ENCODE measurements at regions of chr13 and their contacts with region 1.

Region 1: GRCh38 chr13:20924758-20925394 is 22.3 kb upstream of the XPO4 start:
- DNase-seq: peak; percentile 48 to 82 (median 66)
- ATAC-seq: peak; percentile 67
- H3K4me3 ChIP-seq: no peak overlapping the region
- H3K4me3 Mint-ChIP-seq: no peak overlapping the region
- H3K27ac ChIP-seq: no peak overlapping the region
- H3K27ac Mint-ChIP-seq: no peak overlapping the region
- H3K4me1 ChIP-seq: no peaks in the 10 kb centered on the region
- H3K4me1 Mint-ChIP-seq: no peaks in the 10 kb centered on the region
- H3K27me3 ChIP-seq: no peaks in the 10 kb centered on the region
- H3K27me3 Mint-ChIP-seq: no peaks in the 10 kb centered on the region
- CTCF ChIP-seq: peak; percentile 78

Region 2: DNA sequence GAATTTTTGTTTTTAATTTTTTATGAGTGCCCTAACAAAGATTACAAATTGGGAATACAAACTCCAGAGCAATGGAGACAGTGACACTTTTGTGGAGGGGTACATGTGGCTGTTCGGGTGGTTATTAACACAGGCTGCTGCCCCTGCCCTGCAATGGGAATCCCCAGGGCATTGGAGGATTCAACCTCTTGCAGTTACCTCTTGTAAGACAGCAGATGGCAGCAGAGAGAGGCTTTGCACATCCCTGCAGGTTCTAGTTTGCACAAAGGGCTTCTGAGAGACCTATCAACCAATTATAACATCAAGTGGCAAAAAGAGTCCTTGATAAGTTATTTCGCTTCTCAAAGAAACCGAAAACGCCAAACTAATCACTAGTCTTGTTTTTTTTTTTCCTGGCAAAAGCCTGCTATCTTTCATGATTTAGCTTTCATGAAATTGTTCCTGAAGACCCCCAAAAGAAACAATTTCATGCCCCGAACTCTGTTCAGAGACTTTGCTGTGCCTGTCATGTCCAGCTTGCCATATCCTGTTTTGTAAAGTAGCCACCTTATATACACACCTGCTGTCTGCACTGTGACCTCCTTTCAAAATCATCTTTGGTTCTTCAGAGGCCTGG is 742.5 kb before region 1 on chr13:
- CTCF ChIA-PET with region 1: interaction called, 5 read pairs
- POLR2A ChIA-PET with region 1: no interaction called
- intact Hi-C with region 1: loop called in 1 of 2 experiments (anchors 5 kb)
- DNase-seq: peak in 11 of 14 experiments; percentile 26 to 87 (median 46)
- ATAC-seq: peak; percentile 100
- H3K4me3 ChIP-seq: no peak overlapping the region
- H3K4me3 Mint-ChIP-seq: no peak overlapping the region
- H3K27ac ChIP-seq: no peak overlapping the region
- H3K27ac Mint-ChIP-seq: no peak overlapping the region
- H3K4me1 ChIP-seq: peaks cover 2% of the 10 kb centered on the region
- H3K4me1 Mint-ChIP-seq: no peaks in the 10 kb centered on the region
- H3K27me3 ChIP-seq: peaks cover 17 to 20% of the 10 kb centered on the region in 2 experiments
- H3K27me3 Mint-ChIP-seq: peaks cover 48% of the 10 kb centered on the region
- CTCF ChIP-seq: peak; percentile 84

Region 3: GRCh38 chr13:20192158-20192835 is 732.6 kb before region 1 on chr13:
- CTCF ChIA-PET with region 1: no interaction called
- POLR2A ChIA-PET with region 1: no interaction called
- intact Hi-C with region 1: loop called in 1 of 2 experiments (anchors 5 kb)
- DNase-seq: peak in 3 of 14 experiments; percentile 11 to 40 (median 38)
- ATAC-seq: no peak
- H3K4me3 ChIP-seq: peak overlapping the region; percentile 44
- H3K4me3 Mint-ChIP-seq: peak overlapping the region; percentile 75
- H3K27ac ChIP-seq: no peak overlapping the region
- H3K27ac Mint-ChIP-seq: no peak overlapping the region
- H3K4me1 ChIP-seq: peaks cover 28% of the 10 kb centered on the region
- H3K4me1 Mint-ChIP-seq: peaks cover 25% of the 10 kb centered on the region
- H3K27me3 ChIP-seq: peaks cover 47 to 66% of the 10 kb centered on the region in 2 experiments
- H3K27me3 Mint-ChIP-seq: peaks cover 56% of the 10 kb centered on the region
- CTCF ChIP-seq: no peak

Region 4: GRCh38 chr13:20495082-20496023 is 429.5 kb before region 1 on chr13:
- CTCF ChIA-PET with region 1: interaction called, 8 read pairs
- POLR2A ChIA-PET with region 1: no interaction called
- intact Hi-C with region 1: loop called (anchors 1 kb)
- DNase-seq: peak; percentile 31 to 81 (median 50)
- ATAC-seq: peak; percentile 97
- H3K4me3 ChIP-seq: no peak overlapping the region
- H3K4me3 Mint-ChIP-seq: no peak overlapping the region
- H3K27ac ChIP-seq: no peak overlapping the region
- H3K27ac Mint-ChIP-seq: no peak overlapping the region
- H3K4me1 ChIP-seq: peaks cover 6% of the 10 kb centered on the region
- H3K4me1 Mint-ChIP-seq: no peaks in the 10 kb centered on the region
- H3K27me3 ChIP-seq: no peaks in the 10 kb centered on the region
- H3K27me3 Mint-ChIP-seq: no peaks in the 10 kb centered on the region
- CTCF ChIP-seq: peak; percentile 99

Region 5: DNA sequence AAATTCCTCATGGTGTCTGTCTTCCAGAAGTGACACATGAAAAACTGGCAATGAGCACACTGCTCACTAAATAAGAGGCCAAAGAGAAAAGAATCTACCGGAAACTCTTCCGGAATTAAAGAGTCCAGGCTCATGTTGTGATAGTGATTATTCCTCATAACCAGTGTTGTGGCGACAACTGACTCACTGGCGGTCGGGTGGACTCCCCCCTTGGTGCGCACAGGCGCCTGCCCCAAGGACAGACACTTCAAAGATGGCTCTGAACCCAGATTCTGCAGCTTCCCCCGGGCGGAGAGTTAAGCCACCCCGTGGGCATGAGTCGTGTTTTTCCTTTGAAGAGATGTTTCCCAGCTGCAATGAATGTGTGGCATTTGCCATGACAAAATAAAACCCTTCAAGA is 211.1 kb before region 1 on chr13:
- CTCF ChIA-PET with region 1: no interaction called
- POLR2A ChIA-PET with region 1: no interaction called
- intact Hi-C with region 1: loop called in 1 of 2 experiments (anchors 1 kb)
- DNase-seq: no peak
- ATAC-seq: no peak
- H3K4me3 ChIP-seq: no peak overlapping the region
- H3K4me3 Mint-ChIP-seq: no peak overlapping the region
- H3K27ac ChIP-seq: no peak overlapping the region
- H3K27ac Mint-ChIP-seq: no peak overlapping the region
- H3K4me1 ChIP-seq: peaks cover 11% of the 10 kb centered on the region
- H3K4me1 Mint-ChIP-seq: peaks cover 11% of the 10 kb centered on the region
- H3K27me3 ChIP-seq: no peaks in the 10 kb centered on the region
- H3K27me3 Mint-ChIP-seq: peaks cover 9% of the 10 kb centered on the region
- CTCF ChIP-seq: no peak

Region 6: GRCh38 chr13:20843166-20843565 is 81.7 kb before region 1 on chr13:
- CTCF ChIA-PET with region 1: no interaction called
- POLR2A ChIA-PET with region 1: no interaction called
- intact Hi-C with region 1: loop called in 1 of 2 experiments (anchors 5 kb)
- DNase-seq: no peak
- ATAC-seq: no peak
- H3K4me3 ChIP-seq: no peak overlapping the region
- H3K4me3 Mint-ChIP-seq: no peak overlapping the region
- H3K27ac ChIP-seq: no peak overlapping the region
- H3K27ac Mint-ChIP-seq: no peak overlapping the region
- H3K4me1 ChIP-seq: no peaks in the 10 kb centered on the region
- H3K4me1 Mint-ChIP-seq: peaks cover 5% of the 10 kb centered on the region
- H3K27me3 ChIP-seq: no peaks in the 10 kb centered on the region
- H3K27me3 Mint-ChIP-seq: no peaks in the 10 kb centered on the region
- CTCF ChIP-seq: no peak

Region 7: DNA sequence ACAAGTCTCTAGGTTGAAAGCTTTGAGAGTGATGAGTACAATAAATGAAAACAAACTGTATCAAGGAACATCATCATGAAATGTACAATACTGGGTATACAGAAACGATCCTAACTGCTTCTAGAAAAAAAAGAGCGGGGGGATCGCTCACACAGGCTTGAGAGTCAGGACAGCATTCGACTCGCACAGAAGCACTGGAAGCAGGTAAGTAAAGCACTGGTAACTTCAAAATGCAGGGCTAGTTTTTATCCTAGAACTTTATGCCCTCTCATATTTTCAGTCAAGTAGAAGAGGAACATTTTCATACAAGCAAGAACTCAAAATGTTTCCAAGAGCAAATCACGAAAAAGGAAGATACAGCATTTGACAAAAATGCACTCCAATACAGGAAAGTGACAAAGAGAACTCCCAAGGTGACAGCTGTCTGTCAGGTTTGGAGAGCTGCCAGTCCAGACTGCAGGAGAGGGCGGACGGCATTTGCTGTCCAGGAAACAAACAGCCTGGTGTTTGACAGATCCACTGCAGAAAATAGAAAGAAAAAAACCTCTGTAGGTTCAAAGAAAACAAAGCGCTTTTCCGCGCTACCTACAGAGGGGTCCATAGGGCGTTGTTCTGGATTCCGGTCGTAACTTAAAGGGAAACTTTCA is 35.9 kb after region 1 on chr13:
- CTCF ChIA-PET with region 1: no interaction called
- POLR2A ChIA-PET with region 1: no interaction called
- intact Hi-C with region 1: no loop called
- DNase-seq: no peak
- ATAC-seq: no peak
- H3K4me3 ChIP-seq: no peak overlapping the region
- H3K4me3 Mint-ChIP-seq: no peak overlapping the region
- H3K27ac ChIP-seq: no peak overlapping the region
- H3K27ac Mint-ChIP-seq: no peak overlapping the region
- H3K4me1 ChIP-seq: no peaks in the 10 kb centered on the region
- H3K4me1 Mint-ChIP-seq: no peaks in the 10 kb centered on the region
- H3K27me3 ChIP-seq: peaks cover 0 to 2% of the 10 kb centered on the region in 2 experiments
- H3K27me3 Mint-ChIP-seq: peaks cover 22% of the 10 kb centered on the region
- CTCF ChIP-seq: no peak

Measured in CD4-positive, alpha-beta T cell (primary cell).